CD4-positive, alpha-beta T cell (primary cell): ENCODE measurements at regions of chr11 and their contacts with region 1.

Region 1: DNA sequence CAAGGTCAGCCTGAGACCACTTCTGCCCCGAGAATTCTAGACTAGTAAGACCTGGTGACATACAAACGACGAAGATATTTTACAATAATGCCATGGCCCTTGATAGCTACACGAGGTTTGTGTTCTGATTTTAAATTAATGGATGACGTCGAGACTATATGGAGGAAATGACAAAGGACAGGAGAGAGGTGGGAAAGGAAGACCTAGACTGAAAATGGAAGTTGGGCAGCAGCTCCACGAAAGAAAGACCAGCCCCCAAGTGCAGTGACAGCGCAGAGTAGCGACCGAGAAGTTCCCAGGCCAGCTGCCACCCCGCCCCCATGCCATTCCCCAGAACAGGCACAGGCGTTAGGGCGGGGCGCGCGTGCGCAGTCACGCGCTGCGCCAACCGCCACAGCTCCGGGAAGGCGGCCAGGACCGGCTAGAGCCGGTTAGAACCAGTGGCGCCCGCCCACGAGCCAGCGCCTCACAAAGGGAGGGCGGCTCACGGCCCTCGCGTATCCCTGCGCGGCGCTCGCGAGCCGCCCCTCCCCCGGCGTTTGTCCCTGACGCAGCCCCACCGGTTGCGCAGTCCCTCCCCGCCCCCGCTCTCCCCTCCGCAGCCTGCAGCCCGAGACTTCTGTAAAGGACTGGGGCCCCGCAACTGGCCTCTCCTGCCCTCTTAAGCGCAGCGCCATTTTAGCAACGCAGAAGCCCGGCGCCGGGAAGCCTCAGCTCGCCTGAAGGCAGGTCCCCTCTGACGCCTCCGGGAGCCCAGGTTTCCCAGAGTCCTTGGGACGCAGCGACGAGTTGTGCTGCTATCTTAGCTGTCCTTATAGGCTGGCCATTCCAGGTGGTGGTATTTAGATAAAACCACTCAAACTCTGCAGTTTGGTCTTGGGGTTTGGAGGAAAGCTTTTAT is 1.5 kb upstream of the MALAT1 start:
- DNase-seq: peak; percentile 95 to 99 (median 98)
- ATAC-seq: peak; percentile 78
- H3K4me3 ChIP-seq: peak overlapping the region; percentile 73
- H3K4me3 Mint-ChIP-seq: no peak overlapping the region
- H3K27ac ChIP-seq: peak overlapping the region; percentile 96 to 99
- H3K27ac Mint-ChIP-seq: no peak overlapping the region
- H3K4me1 ChIP-seq: peaks cover 33% of the 10 kb centered on the region
- H3K4me1 Mint-ChIP-seq: peaks cover 28% of the 10 kb centered on the region
- H3K27me3 ChIP-seq: no peaks in the 10 kb centered on the region
- H3K27me3 Mint-ChIP-seq: no peaks in the 10 kb centered on the region
- CTCF ChIP-seq: no peak

Region 2: DNA sequence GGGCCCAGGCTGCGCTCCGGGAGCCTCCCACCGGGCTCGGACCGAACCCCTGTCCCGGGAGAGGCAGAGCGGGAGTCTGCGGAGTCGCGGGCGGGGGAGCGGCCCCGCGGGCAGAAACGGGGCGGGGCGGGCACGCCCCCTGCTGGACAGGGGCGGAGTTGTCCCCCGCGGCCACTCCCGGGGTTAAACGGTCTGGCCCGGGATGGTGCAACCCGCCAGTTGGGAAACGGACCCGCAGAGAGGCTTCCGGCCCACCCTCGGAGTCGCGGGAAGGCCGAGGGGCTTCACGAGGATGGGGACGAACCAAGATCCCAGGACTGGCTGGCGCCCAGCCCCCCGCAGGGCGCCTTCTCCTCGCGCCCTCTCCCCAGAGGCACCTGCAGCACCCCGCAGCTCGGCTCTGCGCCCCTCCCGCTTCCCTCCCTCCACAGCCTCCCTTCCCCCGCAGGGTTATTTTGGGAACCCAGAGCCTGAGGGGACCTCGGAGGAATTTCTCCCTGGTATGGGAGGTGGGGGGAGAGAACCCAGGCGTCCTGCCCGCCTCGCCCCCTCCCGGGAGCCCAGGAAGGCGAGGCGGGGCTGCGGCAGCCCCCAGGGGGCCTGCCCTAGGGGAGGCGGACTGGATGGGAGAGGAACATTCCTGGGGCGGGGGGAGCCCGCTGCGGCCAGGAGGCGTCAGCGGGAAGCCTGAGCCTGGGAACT is 754.4 kb before region 1 on chr11:
- CTCF ChIA-PET with region 1: no interaction called
- POLR2A ChIA-PET with region 1: interaction called, 16 read pairs
- intact Hi-C with region 1: no loop called
- DNase-seq: peak; percentile 58 to 87 (median 72)
- ATAC-seq: peak; percentile 13
- H3K4me3 ChIP-seq: peak overlapping the region; percentile 98
- H3K4me3 Mint-ChIP-seq: peak overlapping the region; percentile 85
- H3K27ac ChIP-seq: peak overlapping the region; percentile 89 to 95
- H3K27ac Mint-ChIP-seq: peak overlapping the region; percentile 92
- H3K4me1 ChIP-seq: peaks cover 67% of the 10 kb centered on the region
- H3K4me1 Mint-ChIP-seq: peaks cover 46% of the 10 kb centered on the region
- H3K27me3 ChIP-seq: no peaks in the 10 kb centered on the region
- H3K27me3 Mint-ChIP-seq: no peaks in the 10 kb centered on the region
- CTCF ChIP-seq: peak; percentile 80

Region 3: GRCh38 chr11:65204646-65205601 is 292.5 kb before region 1 on chr11:
- CTCF ChIA-PET with region 1: no interaction called
- POLR2A ChIA-PET with region 1: no interaction called
- intact Hi-C with region 1: no loop called
- DNase-seq: peak in 13 of 14 experiments; percentile 20 to 74 (median 39)
- ATAC-seq: peak; percentile 76
- H3K4me3 ChIP-seq: no peak overlapping the region
- H3K4me3 Mint-ChIP-seq: no peak overlapping the region
- H3K27ac ChIP-seq: no peak overlapping the region
- H3K27ac Mint-ChIP-seq: no peak overlapping the region
- H3K4me1 ChIP-seq: no peaks in the 10 kb centered on the region
- H3K4me1 Mint-ChIP-seq: no peaks in the 10 kb centered on the region
- H3K27me3 ChIP-seq: no peaks in the 10 kb centered on the region
- H3K27me3 Mint-ChIP-seq: no peaks in the 10 kb centered on the region
- CTCF ChIP-seq: peak; percentile 91

Region 4: GRCh38 chr11:65261591-65262380 is 235.6 kb before region 1 on chr11 and contains the start of gene POLA2:
- CTCF ChIA-PET with region 1: no interaction called
- POLR2A ChIA-PET with region 1: interaction called, 14 read pairs
- intact Hi-C with region 1: no loop called
- DNase-seq: peak; percentile 90 to 99 (median 96)
- ATAC-seq: peak; percentile 88
- H3K4me3 ChIP-seq: peak within 1 kb of the TSS; percentile 84
- H3K4me3 Mint-ChIP-seq: peak within 1 kb of the TSS; percentile 92
- H3K27ac ChIP-seq: peak within 1 kb of the TSS; percentile 84 to 89
- H3K27ac Mint-ChIP-seq: peak within 1 kb of the TSS; percentile 91
- H3K4me1 ChIP-seq: peaks cover 31% of the 10 kb centered on the region
- H3K4me1 Mint-ChIP-seq: peaks cover 54% of the 10 kb centered on the region
- H3K27me3 ChIP-seq: no peaks in the 10 kb centered on the region
- H3K27me3 Mint-ChIP-seq: no peaks in the 10 kb centered on the region
- CTCF ChIP-seq: no peak
- total RNA-seq, gene POLA2: 9.6 to 10.6 TPM

Region 5: DNA sequence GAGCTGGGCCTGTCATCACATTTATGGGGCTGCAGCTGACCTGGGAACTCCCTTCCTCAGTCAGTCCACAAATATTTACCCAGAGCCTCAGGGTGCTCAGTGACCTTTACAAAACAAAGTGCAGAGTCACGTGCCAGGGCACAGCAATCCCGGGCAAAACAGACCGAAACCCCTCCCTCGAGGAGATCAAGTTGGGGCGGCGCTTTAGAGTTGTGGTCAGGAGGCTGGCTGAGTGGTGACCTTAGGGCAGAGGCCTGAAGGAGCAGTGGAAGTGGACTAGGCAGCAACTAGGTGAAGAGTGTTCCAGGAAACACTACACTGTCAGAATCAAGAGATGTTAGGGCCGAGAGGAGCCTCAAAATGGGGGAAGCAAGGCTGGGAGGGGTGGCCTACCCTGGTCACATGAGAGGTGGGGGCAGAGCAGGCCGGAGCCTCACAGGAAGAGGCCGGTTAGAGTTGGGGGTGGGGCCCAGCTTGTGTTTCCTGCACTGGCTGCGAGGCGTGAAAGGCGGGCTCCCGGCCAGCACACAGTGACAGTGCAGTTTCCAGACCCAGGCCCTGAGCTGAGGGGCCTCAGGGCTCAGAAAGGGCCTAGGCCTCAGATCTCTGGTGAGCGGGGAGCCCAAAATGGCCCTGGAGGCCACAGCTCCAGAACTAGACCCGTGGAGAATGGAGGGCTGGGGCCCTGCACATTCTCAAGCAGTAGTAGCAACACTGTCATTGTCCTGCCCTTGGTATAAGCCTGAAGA is 78.5 kb before region 1 on chr11:
- CTCF ChIA-PET with region 1: interaction called, 30 read pairs
- POLR2A ChIA-PET with region 1: interaction called, 3,042 read pairs
- intact Hi-C with region 1: loop called (anchors 1 to 2 kb)
- DNase-seq: peak in 12 of 14 experiments; percentile 56 to 94 (median 75)
- ATAC-seq: peak; percentile 2
- H3K4me3 ChIP-seq: peak overlapping the region; percentile 86
- H3K4me3 Mint-ChIP-seq: peak overlapping the region; percentile 92
- H3K27ac ChIP-seq: peak overlapping the region; percentile 99
- H3K27ac Mint-ChIP-seq: peak overlapping the region; percentile 96
- H3K4me1 ChIP-seq: peaks cover 74% of the 10 kb centered on the region
- H3K4me1 Mint-ChIP-seq: peaks cover 57% of the 10 kb centered on the region
- H3K27me3 ChIP-seq: no peaks in the 10 kb centered on the region
- H3K27me3 Mint-ChIP-seq: no peaks in the 10 kb centered on the region
- CTCF ChIP-seq: no peak

Region 6: GRCh38 chr11:65459552-65459951 is 37.8 kb before region 1 on chr11:
- CTCF ChIA-PET with region 1: no interaction called
- POLR2A ChIA-PET with region 1: interaction called, 968 read pairs
- intact Hi-C with region 1: no loop called
- DNase-seq: no peak
- ATAC-seq: no peak
- H3K4me3 ChIP-seq: no peak overlapping the region
- H3K4me3 Mint-ChIP-seq: no peak overlapping the region
- H3K27ac ChIP-seq: no peak overlapping the region
- H3K27ac Mint-ChIP-seq: no peak overlapping the region
- H3K4me1 ChIP-seq: peaks cover 12% of the 10 kb centered on the region
- H3K4me1 Mint-ChIP-seq: peaks cover 18% of the 10 kb centered on the region
- H3K27me3 ChIP-seq: no peaks in the 10 kb centered on the region
- H3K27me3 Mint-ChIP-seq: no peaks in the 10 kb centered on the region
- CTCF ChIP-seq: no peak

Region 7: DNA sequence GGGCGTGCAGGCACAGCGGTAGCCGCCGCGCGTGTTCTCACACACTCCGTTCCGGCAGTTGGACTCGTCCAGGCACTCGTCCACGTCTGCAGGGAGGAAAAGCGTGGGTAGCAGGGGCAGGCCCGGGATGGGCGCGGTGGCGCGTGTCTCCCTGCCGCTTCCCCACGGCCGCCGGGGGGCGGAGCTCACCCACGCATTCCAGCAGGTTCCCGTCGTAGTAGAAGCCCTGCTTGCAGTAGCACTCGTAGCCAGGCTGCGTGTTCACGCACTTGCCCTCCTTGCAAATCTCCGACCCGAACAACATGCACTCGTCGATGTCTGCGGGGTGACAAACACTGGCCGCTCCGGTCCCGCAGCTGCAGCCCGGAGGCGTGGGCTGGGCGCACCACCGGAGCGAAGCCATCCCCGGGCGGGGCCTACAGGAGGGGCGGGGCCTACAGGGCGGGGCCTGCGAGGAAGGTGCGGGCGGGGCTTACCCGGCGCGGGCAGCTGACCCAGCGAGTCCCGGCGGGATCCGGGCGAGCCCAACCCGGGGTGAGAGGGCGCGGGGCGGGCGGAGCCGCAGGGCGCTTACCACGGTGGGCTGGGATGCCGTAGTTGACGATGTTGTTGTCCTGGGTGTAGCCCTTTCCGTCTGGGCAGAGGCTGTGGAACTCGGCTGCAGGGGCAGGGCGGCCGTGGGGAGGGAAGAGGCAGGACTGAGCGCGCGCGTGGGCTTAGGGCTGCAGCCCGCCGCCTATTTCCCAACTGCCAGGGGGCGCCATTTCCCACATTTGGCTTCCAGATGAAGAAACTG is 43.1 kb after region 1 on chr11:
- CTCF ChIA-PET with region 1: interaction called, 3 read pairs
- POLR2A ChIA-PET with region 1: interaction called, 39 read pairs
- intact Hi-C with region 1: no loop called
- DNase-seq: peak; percentile 81 to 94 (median 85)
- ATAC-seq: peak; percentile 82
- H3K4me3 ChIP-seq: peak overlapping the region; percentile 80
- H3K4me3 Mint-ChIP-seq: peak overlapping the region; percentile 90
- H3K27ac ChIP-seq: peak overlapping the region; percentile 14 to 64
- H3K27ac Mint-ChIP-seq: peak overlapping the region; percentile 65
- H3K4me1 ChIP-seq: peaks cover 23% of the 10 kb centered on the region
- H3K4me1 Mint-ChIP-seq: peaks cover 25% of the 10 kb centered on the region
- H3K27me3 ChIP-seq: no peaks in the 10 kb centered on the region
- H3K27me3 Mint-ChIP-seq: no peaks in the 10 kb centered on the region
- CTCF ChIP-seq: peak; percentile 79

Region 8: GRCh38 chr11:65662799-65663638 is 165.6 kb after region 1 on chr11 and contains the start of gene RELA:
- CTCF ChIA-PET with region 1: no interaction called
- POLR2A ChIA-PET with region 1: interaction called, 18 read pairs
- intact Hi-C with region 1: no loop called
- DNase-seq: peak; percentile 79 to 96 (median 89)
- ATAC-seq: peak; percentile 83
- H3K4me3 ChIP-seq: peak within 1 kb of the TSS; percentile 97
- H3K4me3 Mint-ChIP-seq: peak within 1 kb of the TSS; percentile 92
- H3K27ac ChIP-seq: peak within 1 kb of the TSS; percentile 96 to 97
- H3K27ac Mint-ChIP-seq: peak within 1 kb of the TSS; percentile 94
- H3K4me1 ChIP-seq: peaks cover 59% of the 10 kb centered on the region
- H3K4me1 Mint-ChIP-seq: peaks cover 33% of the 10 kb centered on the region
- H3K27me3 ChIP-seq: no peaks in the 10 kb centered on the region
- H3K27me3 Mint-ChIP-seq: no peaks in the 10 kb centered on the region
- CTCF ChIP-seq: no peak
- total RNA-seq, gene RELA: 379 to 382 TPM